ENCODE measurements at regions of chr2 and their contacts with region 1.

Region 1: DNA sequence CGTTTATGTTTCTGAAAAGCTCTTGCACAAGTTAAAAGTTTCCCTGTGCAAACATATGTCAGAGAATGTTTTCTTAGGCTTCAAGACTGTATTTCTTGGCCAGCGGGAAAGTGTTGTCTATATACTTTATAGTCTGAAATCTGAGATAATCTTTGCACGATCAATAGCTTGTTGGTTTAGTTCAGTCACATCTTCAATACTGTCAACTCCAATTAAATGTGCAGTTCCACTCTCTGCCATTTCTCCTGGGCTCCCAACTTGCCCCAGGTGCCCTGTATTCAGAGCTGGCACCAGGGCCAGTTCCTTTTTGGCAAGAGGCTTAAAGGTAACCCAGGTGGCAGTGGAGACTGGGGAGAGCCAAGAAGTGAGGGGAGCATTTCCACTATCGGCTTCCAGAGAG is 64.4 kb downstream of the ACOXL start:
- DNase-seq: no peak
- H3K4me3 ChIP-seq: no peak overlapping the region
- H3K27ac ChIP-seq: no peak overlapping the region
- H3K4me1 ChIP-seq: no peaks in the 10 kb centered on the region
- H3K27me3 ChIP-seq: peaks cover 3% of the 10 kb centered on the region
- CTCF ChIP-seq: no peak

Region 2: DNA sequence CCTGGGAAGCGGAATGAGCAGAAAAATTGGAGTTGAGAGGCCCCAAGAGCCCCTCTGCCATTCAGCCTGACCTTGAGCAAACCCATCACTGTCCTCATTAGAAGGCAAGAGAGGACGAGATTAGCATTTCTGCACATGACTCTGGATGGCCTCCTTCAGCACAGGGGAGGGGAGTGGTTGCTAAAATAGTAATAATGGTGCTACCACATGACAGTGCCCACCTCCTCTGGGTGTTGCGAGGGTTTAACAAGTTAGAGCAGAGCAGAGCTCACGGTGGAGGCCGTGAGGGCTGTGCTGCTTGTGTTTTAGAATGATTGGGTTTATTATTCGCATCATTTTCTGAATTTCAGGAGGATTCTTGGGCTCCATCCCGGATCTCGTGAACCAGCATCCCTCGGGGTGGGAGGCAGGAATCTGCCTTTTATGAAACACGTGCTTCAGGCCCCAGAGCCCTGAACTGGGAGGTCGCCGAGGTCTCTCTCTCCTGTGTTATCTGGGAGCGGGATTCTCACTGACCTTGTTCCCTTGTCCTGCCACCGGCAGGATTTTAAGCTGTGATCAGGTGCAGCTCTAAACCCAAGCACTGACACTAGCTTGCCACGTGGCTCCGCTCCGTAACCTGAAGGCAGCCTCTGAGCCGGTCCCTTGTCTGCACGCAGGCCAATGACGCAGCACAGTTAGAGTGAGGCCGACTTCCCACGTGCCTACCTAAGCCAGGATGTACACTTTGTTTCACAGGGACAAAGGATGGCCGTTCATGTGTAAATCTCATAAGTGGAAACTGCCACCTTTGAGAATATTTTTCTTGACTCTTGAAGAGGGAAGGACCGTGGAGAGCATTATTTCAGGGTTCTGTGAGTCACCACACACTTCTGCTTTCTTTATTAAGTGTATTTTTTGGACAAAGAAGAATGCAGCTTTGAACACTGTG is 77.9 kb after region 1 on chr2:
- CTCF ChIA-PET with region 1: no interaction called
- dilution Hi-C with region 1: no loop called
- in situ Hi-C with region 1: no loop called
- intact Hi-C with region 1: no loop called
- DNase-seq: no peak
- H3K4me3 ChIP-seq: no peak overlapping the region
- H3K27ac ChIP-seq: no peak overlapping the region
- H3K4me1 ChIP-seq: peaks cover under 1% of the 10 kb centered on the region
- H3K27me3 ChIP-seq: no peaks in the 10 kb centered on the region
- CTCF ChIP-seq: no peak

Region 3: GRCh38 chr2:110960954-110961353 is 164.2 kb after region 1 on chr2:
- CTCF ChIA-PET with region 1: no interaction called
- dilution Hi-C with region 1: no loop called
- in situ Hi-C with region 1: no loop called
- intact Hi-C with region 1: loop called (anchors 10 kb)
- DNase-seq: no peak
- H3K4me3 ChIP-seq: no peak overlapping the region
- H3K27ac ChIP-seq: no peak overlapping the region
- H3K4me1 ChIP-seq: no peaks in the 10 kb centered on the region
- H3K27me3 ChIP-seq: peaks cover 3% of the 10 kb centered on the region
- CTCF ChIP-seq: no peak

Measured in mammary epithelial cell (primary cell).